Right cardiac atrium (tissue), 5 donors: ENCODE measurements at regions of chr10 and their contacts with region 1.

Region 1: DNA sequence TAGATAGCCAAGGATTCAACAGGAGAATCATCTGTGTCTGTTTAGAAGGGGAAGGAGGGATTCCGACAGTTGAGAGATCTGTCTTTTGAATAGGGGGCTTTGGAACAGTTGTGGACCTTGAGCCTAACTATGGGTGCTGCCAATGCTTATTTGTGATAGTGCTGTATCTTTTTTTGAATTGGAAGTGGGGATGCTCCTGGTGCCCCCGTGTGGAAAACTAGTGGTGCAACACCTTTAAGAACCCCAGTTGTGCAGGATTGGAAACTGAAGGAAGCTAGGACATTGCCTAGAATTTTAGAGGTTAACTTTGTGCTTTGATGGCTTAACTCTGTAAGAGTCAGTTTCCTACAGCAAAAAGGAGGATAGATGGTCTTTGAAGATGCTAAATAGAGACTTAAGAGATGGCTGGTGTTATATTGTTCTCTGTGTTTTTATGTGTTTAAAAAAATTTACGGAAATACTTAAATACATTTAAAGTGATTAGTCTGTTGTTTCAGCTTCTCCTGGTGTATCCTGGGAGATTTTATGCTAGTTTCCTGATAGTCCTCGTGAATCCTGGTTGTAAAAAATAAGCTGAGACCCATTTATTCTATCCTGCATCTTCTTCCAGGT is 69.3 kb downstream of the AP3M1 start:
- DNase-seq: no peak
- ATAC-seq: peak; percentile 73
- H3K4me3 ChIP-seq: no peak overlapping the region
- H3K27ac ChIP-seq: no peak overlapping the region
- H3K4me1 ChIP-seq: no peaks in the 10 kb centered on the region
- H3K27me3 ChIP-seq: no peaks in the 10 kb centered on the region

Region 2: DNA sequence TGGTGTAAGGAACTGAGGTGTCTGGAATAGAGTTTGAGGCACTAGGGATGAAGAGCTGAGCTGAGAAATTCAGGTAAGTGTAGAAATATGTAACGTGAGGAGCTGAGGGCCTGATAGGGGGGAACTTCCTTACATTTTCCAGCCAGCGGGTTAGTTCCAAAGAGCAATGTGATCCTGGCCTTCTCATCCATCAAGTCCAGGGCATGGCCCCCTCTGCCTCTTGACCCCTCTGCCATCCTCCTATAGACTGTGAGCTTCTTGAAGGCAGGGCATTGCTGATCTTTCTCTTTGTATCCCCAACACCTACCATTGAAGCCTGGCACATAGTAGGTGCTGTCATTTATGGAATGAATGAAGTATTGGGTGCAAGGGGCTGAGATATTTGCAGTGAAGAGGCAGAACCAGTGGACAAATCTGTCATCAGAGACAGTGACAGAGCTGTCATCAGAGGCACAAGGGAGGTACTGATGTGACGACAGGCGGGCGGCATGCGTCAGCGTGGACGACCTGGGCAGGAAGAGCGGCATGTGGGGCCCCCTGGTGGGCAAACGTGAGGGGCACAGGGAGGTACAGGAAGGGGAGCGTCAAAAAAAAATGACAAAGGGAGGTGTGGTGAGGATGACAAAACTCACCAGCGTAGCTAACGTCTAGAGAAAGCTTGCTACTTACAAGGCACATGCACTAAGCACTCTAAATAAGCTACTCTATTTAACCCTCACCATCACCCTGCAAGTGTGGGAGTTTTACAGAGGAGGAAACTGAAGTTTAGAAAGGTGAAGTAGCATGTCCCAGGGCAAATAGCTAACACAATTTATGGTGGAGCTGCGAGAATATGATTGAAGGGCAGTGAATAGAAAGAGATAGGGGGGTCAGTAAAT is 201.8 kb before region 1 on chr10:
- intact Hi-C with region 1: loop called in 3 of 4 experiments (anchors 10 kb)
- DNase-seq: peak; percentile 89 to 95 (median 95)
- ATAC-seq: peak; percentile 92
- H3K4me3 ChIP-seq: no peak overlapping the region
- H3K27ac ChIP-seq: no peak overlapping the region
- H3K4me1 ChIP-seq: no peaks in the 10 kb centered on the region
- H3K27me3 ChIP-seq: no peaks in the 10 kb centered on the region

Region 3: DNA sequence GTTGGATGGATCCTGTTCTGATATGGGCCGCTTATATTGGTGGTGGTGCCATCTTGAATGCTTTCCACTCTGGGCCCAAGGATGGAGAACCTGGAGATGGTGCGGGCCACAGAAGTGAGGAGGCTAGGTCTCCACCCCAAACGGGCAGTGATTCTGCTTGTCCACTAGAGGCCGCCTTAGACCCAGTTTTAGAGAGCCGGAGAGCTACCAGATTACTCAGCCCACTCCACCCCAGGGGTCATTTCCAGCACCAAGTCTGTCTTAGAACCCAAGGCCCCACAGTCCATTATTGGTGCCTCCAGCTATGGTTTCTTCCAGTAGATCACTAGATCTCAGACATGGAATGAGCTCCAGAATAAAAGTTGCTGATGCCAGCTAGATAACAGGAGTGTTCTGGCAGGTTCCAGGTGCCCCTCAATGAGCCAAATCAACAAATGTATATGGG is 195.2 kb before region 1 on chr10:
- intact Hi-C with region 1: loop called (anchors 2 to 10 kb)
- DNase-seq: peak; percentile 74 to 81 (median 79)
- ATAC-seq: peak; percentile 88
- H3K4me3 ChIP-seq: no peak overlapping the region
- H3K27ac ChIP-seq: peak overlapping the region; percentile 88
- H3K4me1 ChIP-seq: peaks cover 20% of the 10 kb centered on the region
- H3K27me3 ChIP-seq: no peaks in the 10 kb centered on the region

Region 4: DNA sequence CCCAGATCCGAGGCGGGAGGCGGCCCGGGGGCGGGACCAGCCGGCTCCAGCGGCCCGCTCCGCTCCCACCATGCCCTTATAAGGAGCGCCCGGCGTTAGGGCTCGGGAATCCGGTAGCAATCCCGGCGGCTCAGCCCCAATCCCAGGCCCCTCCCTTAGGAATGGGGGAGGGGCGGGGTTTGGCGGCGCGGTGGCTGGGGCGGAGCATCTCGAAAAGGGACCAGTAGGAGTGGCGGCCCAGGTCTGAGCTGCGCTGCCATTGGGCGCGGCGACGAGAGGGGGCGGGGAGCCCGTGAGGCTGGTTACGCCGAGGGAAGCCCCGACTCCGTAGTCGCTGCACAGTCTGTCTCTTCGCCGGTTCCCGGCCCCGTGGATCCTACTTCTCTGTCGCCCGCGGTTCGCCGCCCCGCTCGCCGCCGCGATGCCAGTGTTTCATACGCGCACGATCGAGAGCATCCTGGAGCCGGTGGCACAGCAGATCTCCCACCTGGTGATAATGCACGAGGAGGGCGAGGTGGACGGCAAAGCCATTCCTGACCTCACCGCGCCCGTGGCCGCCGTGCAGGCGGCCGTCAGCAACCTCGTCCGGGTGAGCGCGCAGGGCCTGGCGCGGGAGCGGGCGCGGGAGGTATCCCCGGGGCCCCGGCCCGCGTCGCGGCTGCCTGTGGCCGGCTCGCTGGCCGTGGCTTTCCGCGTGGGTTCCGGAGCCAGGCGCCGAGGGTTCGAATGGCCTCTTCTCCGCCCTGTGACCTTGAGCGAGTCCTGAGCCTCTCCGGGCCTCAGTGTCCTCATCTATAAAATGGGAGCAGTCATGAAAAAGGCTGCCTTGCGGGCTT is 83.3 kb before region 1 on chr10 and contains the start of gene VCL:
- intact Hi-C with region 1: loop called in 2 of 4 experiments (anchors 5 kb)
- DNase-seq: peak; percentile 97 to 99 (median 99)
- ATAC-seq: peak; percentile 97
- H3K4me3 ChIP-seq: peak within 1 kb of the TSS; percentile 96
- H3K27ac ChIP-seq: peak within 1 kb of the TSS; percentile 94
- H3K4me1 ChIP-seq: peaks cover 3% of the 10 kb centered on the region
- H3K27me3 ChIP-seq: no peaks in the 10 kb centered on the region
- total RNA-seq, gene VCL: 203 to 246 (median 224) TPM